ENCODE measurements at regions of chr3 and their contacts with region 1.

Region 1: GRCh38 chr3:15405448-15406050 is 21.8 kb downstream of the METTL6 start:
- DNase-seq: no peak
- H3K4me3 Mint-ChIP-seq: no peak overlapping the region
- H3K27ac Mint-ChIP-seq: no peak overlapping the region
- H3K4me1 Mint-ChIP-seq: peaks cover 5% of the 10 kb centered on the region
- H3K27me3 Mint-ChIP-seq: no peaks in the 10 kb centered on the region

Region 2: DNA sequence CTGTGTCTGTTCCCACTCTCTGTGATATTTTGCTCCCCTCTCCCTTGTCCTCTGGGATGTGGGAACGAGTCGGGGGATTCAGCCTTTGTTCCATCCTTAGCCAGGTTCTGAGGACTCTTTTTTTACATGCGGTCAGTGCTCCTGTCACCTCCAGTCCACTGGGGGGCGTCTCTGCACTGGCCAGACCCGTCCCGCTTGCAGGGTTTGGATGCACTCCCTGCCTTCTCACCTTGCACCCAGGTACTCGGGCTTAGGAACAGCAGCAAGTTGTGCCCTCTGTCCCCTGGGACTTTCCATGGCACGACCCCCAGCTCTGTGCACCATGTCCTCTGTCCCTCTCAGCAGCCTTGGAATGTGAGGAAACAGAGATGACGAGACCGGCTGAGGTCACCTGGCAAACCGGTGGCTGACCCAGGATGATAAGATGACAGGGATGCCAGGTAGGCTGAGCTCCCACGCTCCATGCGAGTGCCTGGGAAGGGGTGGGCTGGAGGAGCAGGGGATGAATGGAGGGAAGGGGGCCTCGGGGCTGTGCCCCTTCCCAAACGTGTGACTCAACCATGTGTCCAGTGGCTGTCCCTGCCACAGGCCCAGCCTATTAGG is 614.1 kb before region 1 on chr3:
- intact Hi-C with region 1: no loop called
- DNase-seq: peak; percentile 37
- H3K4me3 Mint-ChIP-seq: no peak overlapping the region
- H3K27ac Mint-ChIP-seq: no peak overlapping the region
- H3K4me1 Mint-ChIP-seq: no peaks in the 10 kb centered on the region
- H3K27me3 Mint-ChIP-seq: peaks cover 1% of the 10 kb centered on the region

Region 3: GRCh38 chr3:15108082-15108545 is 297.4 kb before region 1 on chr3:
- intact Hi-C with region 1: loop called (anchors 5 kb)
- DNase-seq: peak; percentile 61
- H3K4me3 Mint-ChIP-seq: no peak overlapping the region
- H3K27ac Mint-ChIP-seq: no peak overlapping the region
- H3K4me1 Mint-ChIP-seq: no peaks in the 10 kb centered on the region
- H3K27me3 Mint-ChIP-seq: peaks cover 20% of the 10 kb centered on the region

Region 4: GRCh38 chr3:15256861-15257341 is 148.6 kb before region 1 on chr3:
- intact Hi-C with region 1: no loop called
- DNase-seq: no peak
- H3K4me3 Mint-ChIP-seq: no peak overlapping the region
- H3K27ac Mint-ChIP-seq: peak overlapping the region; percentile 1
- H3K4me1 Mint-ChIP-seq: peaks cover 12% of the 10 kb centered on the region
- H3K27me3 Mint-ChIP-seq: no peaks in the 10 kb centered on the region

Region 5: GRCh38 chr3:15319575-15319974 is 86.0 kb before region 1 on chr3:
- intact Hi-C with region 1: no loop called
- DNase-seq: no peak
- H3K4me3 Mint-ChIP-seq: no peak overlapping the region
- H3K27ac Mint-ChIP-seq: no peak overlapping the region
- H3K4me1 Mint-ChIP-seq: peaks cover 40% of the 10 kb centered on the region
- H3K27me3 Mint-ChIP-seq: no peaks in the 10 kb centered on the region

Region 6: DNA sequence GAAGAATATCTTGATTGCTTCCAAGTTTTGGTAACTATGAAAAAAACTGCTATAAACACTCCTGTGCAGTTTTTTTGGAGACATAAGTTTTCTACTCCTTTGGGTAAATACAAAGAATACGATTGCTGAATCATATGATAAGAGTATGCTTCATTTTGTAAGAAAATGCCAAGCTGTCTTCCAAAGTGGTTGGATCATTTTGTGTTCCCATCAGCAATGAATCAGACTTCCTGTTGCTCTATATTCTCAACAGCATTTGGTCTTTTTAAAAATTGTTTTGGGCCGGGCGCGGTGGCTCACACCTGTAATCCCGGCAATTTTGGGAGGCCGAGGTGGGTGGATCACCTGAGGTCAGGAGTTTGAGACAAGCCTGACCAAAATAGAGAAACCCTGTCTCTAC is 210.5 kb after region 1 on chr3:
- intact Hi-C with region 1: no loop called
- DNase-seq: no peak
- H3K4me3 Mint-ChIP-seq: no peak overlapping the region
- H3K27ac Mint-ChIP-seq: no peak overlapping the region
- H3K4me1 Mint-ChIP-seq: peaks cover 8% of the 10 kb centered on the region
- H3K27me3 Mint-ChIP-seq: no peaks in the 10 kb centered on the region

Measured in activated T-helper 2 cell treated with anti-CD3 and anti-CD28 coated beads, Interferon-gamma antibody, Interleukin-2, Interleukin-4, amounts not matched to agents 10 μg/mL and 5 μg/mL and 100 μg/mL, durations not matched to agents 14 hours and 24 hours and 36 hours (primary cell).